PC-3 (cell line): ENCODE measurements at regions of chr2 and their contacts with region 1.

Region 1: GRCh38 chr2:175690113-175690837 is 311.8 kb downstream of the LNPK start:
- DNase-seq: peak; percentile 86
- ATAC-seq: peak; percentile 82
- H3K4me3 ChIP-seq: no peak overlapping the region
- H3K27ac ChIP-seq: no peak overlapping the region
- H3K4me1 ChIP-seq: no peaks in the 10 kb centered on the region
- H3K27me3 ChIP-seq: peaks cover 42% of the 10 kb centered on the region
- CTCF ChIP-seq: peak; percentile 74

Region 2: DNA sequence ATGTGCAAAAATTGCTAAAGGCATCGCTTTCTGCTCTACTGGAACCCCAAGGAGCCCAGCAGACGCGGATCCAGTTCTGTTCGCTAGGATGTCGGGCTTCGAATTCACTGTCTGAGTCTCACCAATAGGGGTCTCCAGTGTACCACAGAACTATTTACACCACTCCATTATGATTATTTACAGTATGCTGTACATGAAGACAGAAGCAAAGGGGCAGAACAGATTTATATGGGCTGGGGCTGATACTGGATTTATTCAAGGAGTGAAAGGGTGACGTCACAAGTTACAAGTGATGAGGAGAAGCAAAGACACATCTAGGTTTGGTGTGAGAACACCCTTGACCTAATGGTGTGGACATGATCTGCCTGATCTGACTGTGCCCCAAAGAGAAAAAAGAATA is 323.5 kb before region 1 on chr2:
- CTCF ChIA-PET with region 1: no interaction called
- POLR2A ChIA-PET with region 1: no interaction called
- intact Hi-C with region 1: loop called (anchors 5 kb)
- DNase-seq: peak; percentile 72
- ATAC-seq: peak; percentile 83
- H3K4me3 ChIP-seq: no peak overlapping the region
- H3K27ac ChIP-seq: no peak overlapping the region
- H3K4me1 ChIP-seq: peaks cover 8% of the 10 kb centered on the region
- H3K27me3 ChIP-seq: peaks cover 36% of the 10 kb centered on the region
- CTCF ChIP-seq: peak; percentile 90

Region 3: DNA sequence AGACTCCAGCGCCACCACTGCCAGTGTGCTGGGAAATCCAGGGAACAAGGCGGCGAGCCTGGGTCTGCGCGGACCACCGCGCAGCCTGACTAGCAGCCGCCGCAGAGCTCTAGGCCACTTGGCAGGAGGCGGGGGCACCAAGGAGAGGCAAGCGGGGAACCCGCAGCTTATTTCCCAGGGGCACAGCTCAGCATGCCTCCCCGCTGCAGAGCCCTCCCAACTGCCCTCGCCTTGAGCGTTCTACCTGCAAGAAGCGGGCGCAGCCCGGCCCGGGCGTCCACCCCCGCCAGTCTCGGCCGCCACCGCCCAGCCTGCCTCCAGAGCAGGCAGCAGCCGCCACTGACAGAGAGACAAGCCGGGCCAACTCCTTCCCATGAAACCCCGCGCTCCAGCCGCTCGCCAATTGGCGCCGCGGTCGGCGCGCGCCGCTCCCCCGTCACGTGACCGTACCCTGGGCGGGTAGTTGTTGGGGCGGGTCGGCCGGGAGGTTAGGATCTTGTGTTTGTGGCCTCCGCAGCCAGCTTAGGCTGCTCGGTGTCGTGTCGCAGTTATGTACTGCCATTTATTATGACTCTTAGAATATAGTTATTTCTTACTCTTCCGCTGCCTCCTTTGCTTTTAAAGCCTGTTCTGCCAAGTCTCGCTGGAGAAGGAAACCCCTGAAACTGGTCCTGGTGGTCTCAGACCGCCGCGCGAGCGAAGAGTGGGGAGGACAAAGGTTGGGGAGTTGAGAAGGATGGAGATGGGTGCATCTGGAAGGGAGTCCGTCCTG is 311.8 kb after region 1 on chr2 and contains the start of gene LNPK:
- CTCF ChIA-PET with region 1: no interaction called
- POLR2A ChIA-PET with region 1: no interaction called
- intact Hi-C with region 1: loop called (anchors 2 kb)
- DNase-seq: peak; percentile 92
- ATAC-seq: peak; percentile 92
- H3K4me3 ChIP-seq: peak within 1 kb of the TSS; percentile 86
- H3K27ac ChIP-seq: no peak within 1 kb of the TSS
- H3K4me1 ChIP-seq: peaks cover 11% of the 10 kb centered on the region
- H3K27me3 ChIP-seq: no peaks in the 10 kb centered on the region
- CTCF ChIP-seq: no peak
- total RNA-seq, gene LNPK: 19.5 and 21.9 TPM in 2 replicates

Region 4: GRCh38 chr2:176110975-176111663 is 420.8 kb after region 1 on chr2:
- CTCF ChIA-PET with region 1: interaction called, 10 read pairs
- POLR2A ChIA-PET with region 1: no interaction called
- intact Hi-C with region 1: no loop called
- DNase-seq: peak; percentile 65
- ATAC-seq: peak; percentile 72
- H3K4me3 ChIP-seq: no peak overlapping the region
- H3K27ac ChIP-seq: no peak overlapping the region
- H3K4me1 ChIP-seq: peaks cover 4% of the 10 kb centered on the region; the same call in 1 of the 2 replicates
- H3K27me3 ChIP-seq: peaks cover 38% of the 10 kb centered on the region
- CTCF ChIP-seq: peak; percentile 91